ENCODE measurements at regions of chr20 and their contacts with region 1.

Region 1: GRCh38 chr20:61234803-61235113 is 17.3 kb upstream of the CDH4 start:
- DNase-seq: no peak
- H3K4me3 ChIP-seq: no peak overlapping the region
- H3K27ac ChIP-seq: no peak overlapping the region
- H3K4me1 ChIP-seq: no peaks in the 10 kb centered on the region
- H3K27me3 ChIP-seq: peaks cover 4% of the 10 kb centered on the region
- CTCF ChIP-seq: no peak

Region 2: GRCh38 chr20:60851826-60852704 is 382.7 kb before region 1 on chr20:
- CTCF ChIA-PET with region 1: no interaction called
- dilution Hi-C with region 1: no loop called
- in situ Hi-C with region 1: no loop called
- intact Hi-C with region 1: loop called (anchors 1 kb)
- DNase-seq: no peak
- H3K4me3 ChIP-seq: no peak overlapping the region
- H3K27ac ChIP-seq: no peak overlapping the region
- H3K4me1 ChIP-seq: no peaks in the 10 kb centered on the region
- H3K27me3 ChIP-seq: no peaks in the 10 kb centered on the region
- CTCF ChIP-seq: peak; percentile 69 to 84

Region 3: GRCh38 chr20:60877071-60877857 is 357.5 kb before region 1 on chr20:
- CTCF ChIA-PET with region 1: no interaction called
- dilution Hi-C with region 1: no loop called
- in situ Hi-C with region 1: no loop called
- intact Hi-C with region 1: no loop called
- DNase-seq: no peak
- H3K4me3 ChIP-seq: no peak overlapping the region
- H3K27ac ChIP-seq: no peak overlapping the region
- H3K4me1 ChIP-seq: no peaks in the 10 kb centered on the region
- H3K27me3 ChIP-seq: peaks cover 5% of the 10 kb centered on the region
- CTCF ChIP-seq: no peak

Region 4: GRCh38 chr20:60993433-60994044 is 241.2 kb before region 1 on chr20:
- CTCF ChIA-PET with region 1: no interaction called
- dilution Hi-C with region 1: no loop called
- in situ Hi-C with region 1: no loop called
- intact Hi-C with region 1: loop called (anchors 2 kb)
- DNase-seq: no peak
- H3K4me3 ChIP-seq: no peak overlapping the region
- H3K27ac ChIP-seq: no peak overlapping the region
- H3K4me1 ChIP-seq: no peaks in the 10 kb centered on the region
- H3K27me3 ChIP-seq: peaks cover 5% of the 10 kb centered on the region
- CTCF ChIP-seq: peak; percentile 36 to 45

Region 5: DNA sequence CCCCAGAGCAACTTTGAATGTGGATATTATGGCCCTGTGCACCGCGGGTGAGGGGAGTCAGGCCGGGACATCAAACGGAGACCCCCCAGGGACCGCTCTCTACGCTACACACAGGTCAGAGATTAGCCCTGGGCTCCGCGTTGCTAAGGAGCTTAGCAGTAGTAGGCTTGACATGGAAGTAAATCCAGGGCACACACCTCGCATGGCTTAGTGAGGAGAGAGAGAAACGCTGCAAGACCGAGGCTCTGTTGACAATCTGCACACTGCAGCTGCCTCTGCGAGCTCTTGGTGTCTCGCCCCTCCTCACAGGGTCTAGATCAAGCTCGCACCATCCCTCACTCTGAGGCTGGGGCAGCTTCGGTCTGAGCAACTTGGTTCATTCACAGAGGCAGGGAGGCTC is 98.8 kb before region 1 on chr20:
- CTCF ChIA-PET with region 1: no interaction called
- dilution Hi-C with region 1: loop called (anchors 5 kb)
- in situ Hi-C with region 1: no loop called
- intact Hi-C with region 1: no loop called
- DNase-seq: no peak
- H3K4me3 ChIP-seq: no peak overlapping the region
- H3K27ac ChIP-seq: no peak overlapping the region
- H3K4me1 ChIP-seq: no peaks in the 10 kb centered on the region
- H3K27me3 ChIP-seq: peaks cover 8% of the 10 kb centered on the region
- CTCF ChIP-seq: no peak

Region 6: GRCh38 chr20:61454053-61454452 is 219.3 kb after region 1 on chr20:
- CTCF ChIA-PET with region 1: no interaction called
- dilution Hi-C with region 1: no loop called
- in situ Hi-C with region 1: no loop called
- intact Hi-C with region 1: no loop called
- DNase-seq: no peak
- H3K4me3 ChIP-seq: no peak overlapping the region
- H3K27ac ChIP-seq: no peak overlapping the region
- H3K4me1 ChIP-seq: no peaks in the 10 kb centered on the region
- H3K27me3 ChIP-seq: no peaks in the 10 kb centered on the region
- CTCF ChIP-seq: no peak